A549 (cell line): ENCODE measurements at regions of chr15 and their contacts with region 1.

Region 1: DNA sequence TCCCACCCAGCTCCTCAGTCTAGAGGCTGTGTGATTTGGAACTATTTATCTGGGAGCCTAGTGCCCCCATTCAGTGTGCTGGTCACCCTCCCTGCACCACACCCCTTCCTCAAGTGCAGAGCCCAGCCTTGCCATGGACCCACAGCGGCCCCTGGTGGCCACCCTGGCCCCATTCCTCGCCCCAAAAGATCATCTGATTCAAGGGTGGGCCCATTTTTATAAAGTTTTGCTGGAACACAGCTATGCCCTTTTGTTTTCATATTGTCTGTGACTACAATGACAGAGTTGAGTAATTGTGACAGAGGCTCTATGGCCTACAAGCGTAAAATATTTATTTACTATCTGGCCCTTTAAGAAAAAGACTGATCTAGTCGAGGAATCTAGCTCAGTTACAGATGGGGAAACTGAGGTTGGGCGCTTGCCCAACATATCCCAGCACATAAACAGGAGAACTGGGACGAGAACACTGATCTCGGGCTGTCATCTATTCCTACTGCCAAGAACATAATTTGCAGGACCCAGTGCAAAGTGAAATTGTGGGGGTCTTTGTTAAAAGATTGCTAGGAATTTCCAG is 1.8 kb downstream of the FES start:
- DNase-seq: peak in 1 of 2 experiments; percentile 61
- ATAC-seq: peak; percentile 57 to 82; a peak in 5 of 6 replicates
- H3K4me3 ChIP-seq: no peak overlapping the region
- H3K27ac ChIP-seq: peak overlapping the region in 1 of 2 experiments; percentile 19; a peak in 1 of 6 replicates
- H3K4me1 ChIP-seq: no peaks in the 10 kb centered on the region
- CTCF ChIP-seq: peak; percentile 99
- EP300 ChIP-seq: no peak
- POLR2A ChIP-seq: no peak
- RAD21 ChIP-seq: peak; percentile 100

Region 2: DNA sequence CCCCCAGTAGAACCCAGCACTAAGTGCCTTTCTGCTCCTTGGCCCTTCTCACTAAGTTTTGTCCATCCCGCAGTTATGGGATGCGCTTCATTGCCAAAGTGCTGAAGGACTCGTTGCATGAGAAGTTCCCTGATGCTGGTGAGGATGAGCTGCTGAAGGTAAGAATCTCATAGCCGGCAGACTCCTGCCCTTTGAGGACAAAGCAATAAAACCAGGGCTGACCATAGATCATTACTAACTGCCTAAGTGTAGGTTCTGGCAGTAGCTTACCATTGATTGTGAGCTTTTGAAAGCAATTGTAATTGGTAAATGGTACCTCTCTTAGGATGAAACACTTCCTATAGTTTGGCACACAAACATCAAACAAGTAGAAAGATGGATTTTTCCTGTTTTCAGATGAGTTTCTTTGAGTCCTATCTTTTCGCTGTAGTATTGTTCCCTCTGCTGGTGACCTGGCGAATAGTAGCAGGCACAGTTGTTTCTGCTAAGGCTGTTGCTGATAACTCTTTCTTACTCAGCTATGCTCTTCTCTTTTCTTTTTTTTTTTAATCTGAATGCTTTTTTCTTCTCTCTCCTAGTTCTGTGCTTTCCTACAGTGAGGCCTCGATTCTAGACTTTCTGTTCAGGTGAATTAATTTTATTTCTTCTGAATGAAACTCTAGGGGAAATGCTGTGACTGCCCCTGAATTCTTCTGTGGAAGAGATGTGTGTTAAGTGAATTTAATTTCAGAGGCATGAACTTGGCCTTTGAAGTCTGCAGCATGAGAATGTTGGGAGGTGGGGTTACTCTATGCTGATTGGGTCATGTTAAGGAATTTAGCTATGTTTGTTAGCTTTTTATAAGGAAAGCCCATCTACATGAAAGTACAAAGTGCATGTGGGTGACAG is 403.8 kb before region 1 on chr15:
- CTCF ChIA-PET with region 1: interaction called, 18 read pairs
- POLR2A ChIA-PET with region 1: no interaction called
- DNase-seq: peak; percentile 35 to 64
- ATAC-seq: peak; percentile 83 to 87; a peak in 5 of 6 replicates
- H3K4me3 ChIP-seq: no peak overlapping the region
- H3K27ac ChIP-seq: no peak overlapping the region
- H3K4me1 ChIP-seq: no peaks in the 10 kb centered on the region
- CTCF ChIP-seq: peak; percentile 98
- EP300 ChIP-seq: no peak
- POLR2A ChIP-seq: no peak
- RAD21 ChIP-seq: peak; percentile 98

Region 3: GRCh38 chr15:90671216-90671615 is 214.9 kb before region 1 on chr15:
- CTCF ChIA-PET with region 1: interaction called, 25 read pairs
- POLR2A ChIA-PET with region 1: no interaction called
- DNase-seq: no peak
- ATAC-seq: no peak
- H3K4me3 ChIP-seq: no peak overlapping the region
- H3K27ac ChIP-seq: no peak overlapping the region
- H3K4me1 ChIP-seq: 0 out of 3 replicates have a peak, but pooled peaks cover 9% of the 10 kb centered on the region
- CTCF ChIP-seq: no peak
- EP300 ChIP-seq: no peak
- POLR2A ChIP-seq: no peak
- RAD21 ChIP-seq: no peak

Region 4: DNA sequence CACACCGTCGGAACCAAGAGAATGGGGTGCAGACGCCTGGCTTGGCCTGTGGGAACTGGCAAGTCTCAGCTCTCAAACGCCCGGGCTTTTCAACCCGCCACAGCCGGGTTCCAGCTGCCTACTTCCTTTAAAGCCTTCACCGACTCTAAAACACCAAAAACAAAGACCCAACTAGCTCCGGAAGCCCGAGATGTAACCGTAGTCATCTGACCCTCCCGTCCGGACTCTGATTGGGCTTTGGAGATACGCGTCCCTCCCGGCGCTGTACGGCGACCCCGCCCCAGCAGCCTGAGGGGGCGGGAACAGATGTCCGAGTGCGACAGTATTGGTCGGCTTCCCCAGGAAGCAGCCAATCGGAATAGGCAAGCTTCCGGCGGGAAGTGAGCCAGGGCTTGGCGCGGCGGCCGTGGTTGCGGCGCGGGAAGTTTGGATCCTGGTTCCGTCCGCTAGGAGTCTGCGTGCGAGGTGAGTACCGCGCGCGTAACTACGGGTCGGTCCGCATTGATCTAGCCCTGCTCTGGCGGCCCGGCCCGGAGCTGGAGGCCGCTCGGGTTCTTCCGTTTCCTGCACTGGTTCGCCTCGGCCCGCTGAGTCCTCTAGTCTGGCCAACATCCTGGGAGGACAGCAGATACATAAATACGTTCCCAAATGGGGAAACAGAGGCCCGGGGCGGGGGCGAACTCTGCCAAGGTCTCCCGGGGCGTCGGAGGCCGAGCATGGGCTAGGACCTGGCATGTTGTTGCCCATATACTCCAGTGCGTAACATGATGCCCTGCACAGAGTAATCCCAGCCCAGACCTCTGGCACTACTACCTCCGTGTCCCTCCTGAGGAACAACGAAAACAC is 168.9 kb before region 1 on chr15 and contains the start of gene BLM:
- CTCF ChIA-PET with region 1: interaction called, 46 read pairs
- POLR2A ChIA-PET with region 1: interaction called, 3 read pairs
- DNase-seq: peak; percentile 98 to 100
- ATAC-seq: peak; percentile 99 to 100
- H3K4me3 ChIP-seq: peak within 1 kb of the TSS; percentile 72
- H3K27ac ChIP-seq: peak within 1 kb of the TSS; percentile 81 to 84
- H3K4me1 ChIP-seq: peaks cover 12% of the 10 kb centered on the region; the same call in 1 of the 3 replicates
- CTCF ChIP-seq: no peak
- EP300 ChIP-seq: no peak
- POLR2A ChIP-seq: peak; percentile 64
- RAD21 ChIP-seq: 0 out of 5 replicates have a peak, but pooled peaks of 1 of the 2 experiments have one; percentile 9
- polyA plus RNA-seq, gene BLM: 14.5 and 15.2 TPM in 2 replicates

Region 5: GRCh38 chr15:90789462-90789861 is 96.7 kb before region 1 on chr15:
- CTCF ChIA-PET with region 1: interaction called, 15 read pairs
- POLR2A ChIA-PET with region 1: no interaction called
- DNase-seq: no peak
- ATAC-seq: no peak
- H3K4me3 ChIP-seq: no peak overlapping the region
- H3K27ac ChIP-seq: no peak overlapping the region
- H3K4me1 ChIP-seq: no peaks in the 10 kb centered on the region
- CTCF ChIP-seq: no peak
- EP300 ChIP-seq: no peak
- POLR2A ChIP-seq: no peak
- RAD21 ChIP-seq: no peak

Region 6: GRCh38 chr15:90845201-90845949 is 40.8 kb before region 1 on chr15:
- CTCF ChIA-PET with region 1: interaction called, 29 read pairs
- POLR2A ChIA-PET with region 1: no interaction called
- DNase-seq: peak; percentile 46 to 60
- ATAC-seq: peak; percentile 89 to 97
- H3K4me3 ChIP-seq: no peak overlapping the region
- H3K27ac ChIP-seq: peak overlapping the region; percentile 32 to 74; a peak in 4 of 6 replicates
- H3K4me1 ChIP-seq: peaks cover 12% of the 10 kb centered on the region
- CTCF ChIP-seq: no peak
- EP300 ChIP-seq: no peak
- POLR2A ChIP-seq: no peak
- RAD21 ChIP-seq: no peak

Region 7: GRCh38 chr15:90924375-90924774 is 38.2 kb after region 1 on chr15:
- CTCF ChIA-PET with region 1: interaction called, 69 read pairs
- POLR2A ChIA-PET with region 1: no interaction called
- DNase-seq: no peak
- ATAC-seq: no peak
- H3K4me3 ChIP-seq: no peak overlapping the region
- H3K27ac ChIP-seq: no peak overlapping the region
- H3K4me1 ChIP-seq: peaks cover 5% of the 10 kb centered on the region
- CTCF ChIP-seq: no peak
- EP300 ChIP-seq: no peak
- POLR2A ChIP-seq: no peak
- RAD21 ChIP-seq: no peak